ENCODE measurements at regions of chr17 and their contacts with region 1.

Region 1: DNA sequence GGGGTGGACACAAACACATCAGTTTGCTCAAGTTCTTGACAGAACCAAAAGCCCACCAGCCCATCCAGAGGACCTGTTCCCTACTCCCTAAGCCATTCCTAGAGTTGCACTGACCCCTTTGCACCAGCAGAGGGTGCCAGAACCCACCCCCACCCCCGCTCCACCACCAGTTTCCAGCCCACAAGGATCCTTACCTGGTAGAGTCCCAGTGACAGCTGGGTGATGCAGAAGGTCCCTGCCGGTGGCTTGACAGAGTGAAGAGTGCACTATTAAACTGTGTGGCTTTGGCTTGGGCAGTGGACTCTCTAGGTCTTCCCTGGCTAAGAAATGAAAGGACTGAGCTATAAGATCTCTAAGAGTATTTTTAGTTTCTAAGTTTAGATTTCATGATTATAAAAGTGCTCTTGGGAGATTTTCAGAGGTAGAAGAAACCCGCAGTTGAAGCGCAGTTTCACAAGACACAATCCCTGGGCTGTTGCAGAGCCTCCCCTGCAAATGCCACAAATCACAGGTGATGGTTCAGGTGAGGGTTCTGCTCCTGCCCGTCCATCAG is 73.3 kb upstream of the MTMR4 start:
- DNase-seq: peak; percentile 32
- H3K4me3 ChIP-seq: no peak overlapping the region
- H3K27ac ChIP-seq: no peak overlapping the region
- H3K4me1 ChIP-seq: peaks cover 9% of the 10 kb centered on the region
- H3K27me3 ChIP-seq: no peaks in the 10 kb centered on the region
- CTCF ChIP-seq: peak; percentile 87 to 98

Region 2: DNA sequence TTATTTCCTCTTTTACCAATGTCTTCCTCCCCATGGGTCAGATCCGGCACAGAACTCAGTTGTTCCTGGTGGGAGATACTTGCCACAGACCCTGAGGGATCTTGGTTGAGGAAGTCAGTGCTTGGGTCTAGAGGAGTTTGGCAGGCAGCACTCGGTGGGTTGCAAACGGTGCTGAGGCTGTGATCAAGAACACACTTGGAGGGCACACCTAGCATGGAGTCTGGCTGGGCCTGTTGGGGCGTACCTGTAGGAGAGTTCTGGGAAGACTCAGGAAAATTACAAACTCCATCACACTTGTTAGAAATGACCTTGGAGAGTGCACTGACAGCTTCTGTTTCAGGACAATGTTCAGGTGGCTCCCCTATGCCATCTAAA is 92.3 kb before region 1 on chr17:
- CTCF ChIA-PET with region 1: no interaction called
- dilution Hi-C with region 1: no loop called
- in situ Hi-C with region 1: no loop called
- intact Hi-C with region 1: no loop called
- DNase-seq: no peak
- H3K4me3 ChIP-seq: no peak overlapping the region
- H3K27ac ChIP-seq: no peak overlapping the region
- H3K4me1 ChIP-seq: no peaks in the 10 kb centered on the region
- H3K27me3 ChIP-seq: no peaks in the 10 kb centered on the region
- CTCF ChIP-seq: no peak

Region 3: GRCh38 chr17:58565780-58566189 is 22.0 kb before region 1 on chr17:
- CTCF ChIA-PET with region 1: no interaction called
- dilution Hi-C with region 1: no loop called
- in situ Hi-C with region 1: no loop called
- intact Hi-C with region 1: no loop called
- DNase-seq: peak; percentile 7
- H3K4me3 ChIP-seq: no peak overlapping the region
- H3K27ac ChIP-seq: no peak overlapping the region
- H3K4me1 ChIP-seq: peaks cover 7% of the 10 kb centered on the region
- H3K27me3 ChIP-seq: no peaks in the 10 kb centered on the region
- CTCF ChIP-seq: no peak

Region 4: GRCh38 chr17:58624751-58625150 is 37.0 kb after region 1 on chr17:
- CTCF ChIA-PET with region 1: no interaction called
- dilution Hi-C with region 1: no loop called
- in situ Hi-C with region 1: no loop called
- intact Hi-C with region 1: no loop called
- DNase-seq: no peak
- H3K4me3 ChIP-seq: no peak overlapping the region
- H3K27ac ChIP-seq: no peak overlapping the region
- H3K4me1 ChIP-seq: no peaks in the 10 kb centered on the region
- H3K27me3 ChIP-seq: peaks cover 3% of the 10 kb centered on the region
- CTCF ChIP-seq: no peak

Region 5: DNA sequence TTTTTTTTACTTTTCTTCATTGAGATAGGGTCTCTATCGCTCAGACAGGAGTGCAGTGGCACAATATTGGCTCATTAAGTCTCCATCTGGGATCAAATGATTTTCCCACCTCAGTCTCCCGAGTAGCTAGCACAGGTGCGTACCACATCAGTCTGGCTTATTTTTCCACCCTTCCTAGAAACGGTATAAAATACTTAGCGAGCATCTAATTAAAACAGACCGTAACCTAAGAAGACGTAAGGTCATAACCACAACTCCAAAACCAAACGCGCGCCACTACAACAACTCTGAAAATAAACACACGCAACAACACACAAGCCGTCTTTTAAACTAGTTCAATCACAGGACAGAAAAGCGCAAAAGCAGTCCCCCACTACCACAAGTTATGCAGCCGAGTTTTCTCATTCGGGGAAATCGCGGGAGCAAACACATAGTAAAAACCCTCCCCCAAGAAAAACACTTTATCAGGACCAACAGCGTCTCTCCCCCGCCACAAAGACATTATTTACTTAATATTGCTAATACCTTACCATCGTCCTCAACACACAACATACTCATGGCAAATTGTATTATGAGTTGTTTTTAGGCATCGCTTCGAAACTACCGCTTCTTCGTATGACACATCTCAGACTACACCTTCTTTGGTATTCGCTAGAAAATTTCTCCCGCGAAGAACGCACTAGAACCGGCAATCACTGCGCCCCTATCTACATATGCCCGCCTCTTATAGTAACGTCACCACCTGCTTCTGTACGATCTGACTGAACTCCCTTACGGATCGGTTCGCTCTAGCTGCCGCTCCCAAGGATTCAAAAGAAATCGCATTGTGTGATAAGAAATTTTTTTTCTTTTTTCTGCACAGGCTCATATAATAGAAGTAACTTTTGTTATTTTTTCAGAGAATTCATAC is 71.3 kb after region 1 on chr17:
- CTCF ChIA-PET with region 1: interaction called, 25 read pairs
- dilution Hi-C with region 1: no loop called
- in situ Hi-C with region 1: no loop called
- intact Hi-C with region 1: loop called (anchors 1 kb)
- DNase-seq: peak; percentile 99
- H3K4me3 ChIP-seq: peak overlapping the region; percentile 22 to 40 (median 31)
- H3K27ac ChIP-seq: peak overlapping the region; percentile 99
- H3K4me1 ChIP-seq: no peaks in the 10 kb centered on the region
- H3K27me3 ChIP-seq: no peaks in the 10 kb centered on the region
- CTCF ChIP-seq: no peak

Region 6: GRCh38 chr17:58679263-58680037 is 91.7 kb after region 1 on chr17:
- CTCF ChIA-PET with region 1: interaction called, 6 read pairs
- dilution Hi-C with region 1: no loop called
- in situ Hi-C with region 1: no loop called
- intact Hi-C with region 1: loop called (anchors 5 kb)
- DNase-seq: peak; percentile 97
- H3K4me3 ChIP-seq: no peak overlapping the region
- H3K27ac ChIP-seq: peak overlapping the region; percentile 83
- H3K4me1 ChIP-seq: no peaks in the 10 kb centered on the region
- H3K27me3 ChIP-seq: no peaks in the 10 kb centered on the region
- CTCF ChIP-seq: no peak

Region 7: GRCh38 chr17:58692239-58693055 is 104.7 kb after region 1 on chr17 and contains the start of gene RAD51C:
- CTCF ChIA-PET with region 1: no interaction called
- dilution Hi-C with region 1: no loop called
- in situ Hi-C with region 1: no loop called
- intact Hi-C with region 1: loop called (anchors 5 kb)
- DNase-seq: peak; percentile 81
- H3K4me3 ChIP-seq: peak within 1 kb of the TSS; percentile 52 to 85 (median 74)
- H3K27ac ChIP-seq: peak within 1 kb of the TSS; percentile 76
- H3K4me1 ChIP-seq: peaks cover 11% of the 10 kb centered on the region
- H3K27me3 ChIP-seq: no peaks in the 10 kb centered on the region
- CTCF ChIP-seq: no peak
- total RNA-seq, gene RAD51C: 20.8 to 55.6 TPM

Region 8: DNA sequence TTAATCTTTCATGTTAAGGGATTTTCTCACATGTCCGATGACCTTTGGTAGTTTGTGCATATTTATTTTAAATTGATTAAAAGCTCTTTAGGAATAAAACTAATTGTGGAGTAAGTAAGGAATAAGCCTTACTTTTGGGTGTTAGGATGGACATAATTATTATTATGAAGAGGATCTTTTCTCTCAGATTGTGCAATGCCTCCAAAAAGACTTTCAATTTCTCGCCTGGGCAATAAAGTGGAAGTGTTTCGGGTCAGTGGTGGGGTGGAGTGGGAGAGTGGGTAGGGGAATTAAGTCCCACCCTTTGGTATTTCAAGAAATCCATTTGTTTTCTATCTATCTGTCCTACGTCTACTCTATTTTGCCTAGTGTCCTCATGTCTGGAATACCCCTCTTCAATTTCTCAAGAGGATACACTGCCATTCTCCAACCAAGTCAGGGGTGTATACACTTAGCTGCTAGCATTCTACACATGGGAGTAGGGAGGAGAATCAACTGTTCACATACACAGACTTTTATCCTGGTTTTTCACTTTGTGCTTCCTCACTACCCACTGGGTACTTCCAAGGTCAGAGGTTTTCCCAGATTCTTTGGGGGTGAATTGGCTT is 297.7 kb after region 1 on chr17:
- CTCF ChIA-PET with region 1: interaction called, 24 read pairs
- dilution Hi-C with region 1: no loop called
- in situ Hi-C with region 1: no loop called
- intact Hi-C with region 1: no loop called
- DNase-seq: no peak
- H3K4me3 ChIP-seq: no peak overlapping the region
- H3K27ac ChIP-seq: no peak overlapping the region
- H3K4me1 ChIP-seq: no peaks in the 10 kb centered on the region
- H3K27me3 ChIP-seq: no peaks in the 10 kb centered on the region
- CTCF ChIP-seq: no peak

Region 9: DNA sequence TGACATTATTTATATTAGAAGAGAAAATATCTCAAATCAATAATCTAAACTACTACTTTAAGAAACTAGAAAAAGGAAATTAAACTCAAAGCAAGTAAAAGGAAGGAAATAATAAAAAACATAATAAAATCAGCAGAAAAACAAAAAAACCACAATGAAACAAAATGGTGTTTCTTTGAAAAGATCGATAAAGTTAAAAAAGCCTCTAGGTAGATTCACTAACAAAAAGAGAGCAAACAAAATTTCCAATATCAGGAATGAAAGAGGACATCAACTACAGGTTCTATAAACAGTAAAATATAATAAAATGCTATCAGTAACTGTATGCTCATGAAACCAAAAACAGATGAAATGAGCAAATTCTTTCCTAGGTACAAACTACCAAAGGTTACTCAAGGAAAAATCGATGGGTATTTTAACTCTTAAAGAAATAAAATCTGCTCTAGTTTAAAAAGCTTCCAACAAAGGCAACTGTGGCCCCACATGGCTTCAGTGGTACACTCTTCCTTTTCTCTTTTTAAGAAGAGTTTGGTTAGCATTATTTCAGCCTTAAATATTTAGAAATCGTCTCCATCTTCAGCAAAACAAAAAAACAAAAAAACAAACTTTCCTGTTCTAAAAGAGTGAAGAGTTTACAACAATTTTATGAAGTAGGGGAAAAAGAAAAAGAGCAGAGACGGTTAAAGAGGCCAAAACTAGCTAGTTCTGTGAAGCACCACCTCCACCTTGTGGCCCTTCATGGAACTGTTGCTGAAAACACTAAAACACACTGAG is 416.7 kb after region 1 on chr17:
- CTCF ChIA-PET with region 1: no interaction called
- dilution Hi-C with region 1: no loop called
- in situ Hi-C with region 1: no loop called
- intact Hi-C with region 1: loop called (anchors 1 kb)
- DNase-seq: peak; percentile 29
- H3K4me3 ChIP-seq: no peak overlapping the region
- H3K27ac ChIP-seq: no peak overlapping the region
- H3K4me1 ChIP-seq: no peaks in the 10 kb centered on the region
- H3K27me3 ChIP-seq: no peaks in the 10 kb centered on the region
- CTCF ChIP-seq: peak; percentile 90 to 92